Transverse colon (tissue), 4 donors: ENCODE measurements at regions of chr2 and their contacts with region 1.

Region 1: DNA sequence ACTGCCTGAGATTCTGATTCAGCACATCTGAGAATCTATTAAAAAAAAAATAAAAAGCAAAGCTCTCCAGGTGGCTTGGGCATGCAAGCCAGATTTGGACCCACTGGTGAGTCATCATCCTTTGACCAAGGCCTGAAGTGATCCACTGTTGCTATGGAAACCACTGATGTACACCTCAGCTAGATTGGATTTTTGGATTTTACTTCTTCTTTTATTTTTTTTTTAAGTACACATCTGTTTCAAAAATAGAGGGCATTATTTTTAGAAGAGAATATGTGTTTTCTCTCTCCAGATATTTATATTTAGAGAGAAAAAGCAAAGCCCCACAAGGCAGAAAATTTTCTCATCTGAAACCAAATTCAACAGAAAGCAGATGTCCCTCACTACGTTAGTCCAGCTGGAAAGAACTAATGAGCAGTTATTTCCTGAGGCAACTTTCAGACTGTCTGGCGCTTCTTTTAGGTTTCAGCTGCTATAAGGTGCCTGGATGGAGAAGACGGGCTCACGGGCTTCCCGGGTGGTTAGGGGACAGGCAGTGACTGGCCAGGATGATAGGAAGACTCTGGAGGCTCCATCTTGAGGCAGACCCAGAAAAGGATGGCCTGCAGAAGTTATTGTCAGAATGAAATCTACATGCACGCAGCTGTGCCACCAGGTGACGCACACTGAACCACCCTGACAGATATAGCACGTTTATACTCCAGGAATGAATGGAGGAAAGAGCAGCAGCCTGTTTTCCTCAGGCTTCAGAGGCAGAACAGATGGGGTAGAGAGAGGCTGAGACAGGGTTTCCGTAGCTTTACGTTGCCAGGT is 50.5 kb downstream of the MRPL35 start:
- DNase-seq: peak; percentile 54
- H3K4me3 ChIP-seq: no peak overlapping the region
- H3K27ac ChIP-seq: peak overlapping the region; percentile 34 to 81 (median 76)
- H3K4me1 ChIP-seq: peaks cover 4 to 22% (median 14%) of the 10 kb centered on the region in 4 donors
- H3K27me3 ChIP-seq: no peaks in the 10 kb centered on the region
- CTCF ChIP-seq: peak; percentile 33 to 75 (median 56)
- EP300 ChIP-seq: no peak
- POLR2A ChIP-seq: no peak

Region 2: DNA sequence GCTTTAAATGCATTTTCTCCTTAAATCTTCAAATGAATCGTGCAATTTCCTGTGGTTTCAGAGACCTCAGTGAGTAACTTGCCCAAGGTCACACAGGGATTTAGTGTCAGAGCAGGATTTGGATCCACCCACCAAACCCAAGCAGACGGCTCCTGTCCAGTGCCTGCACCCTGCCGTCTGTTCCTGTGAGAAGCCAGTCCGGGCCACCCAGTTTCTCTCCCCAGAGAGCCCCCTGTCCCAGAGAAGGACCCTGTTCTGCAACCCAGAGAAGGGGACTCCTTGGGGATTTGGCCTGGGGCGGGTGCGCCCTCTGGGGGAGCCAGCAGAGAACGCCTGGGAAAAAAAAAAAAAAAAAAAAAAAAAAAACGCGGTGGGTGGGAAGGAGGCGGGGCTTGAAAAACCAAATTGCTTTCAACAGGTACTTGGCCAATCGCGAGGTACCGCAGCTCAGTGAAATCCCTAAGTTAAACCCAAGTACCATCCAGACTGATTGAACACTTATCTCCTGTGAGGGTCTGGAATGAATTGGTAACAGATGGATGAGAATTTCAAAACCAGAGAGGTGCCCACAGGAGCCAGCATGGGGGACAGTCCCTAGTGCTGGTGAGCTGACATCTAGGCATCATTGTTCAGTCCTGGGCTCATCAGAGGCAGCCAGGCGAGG is 118.5 kb after region 1 on chr2:
- in situ Hi-C with region 1: loop called in 1 of 4 experiments (anchors 25 kb)
- intact Hi-C with region 1: no loop called
- DNase-seq: peak; percentile 50
- H3K4me3 ChIP-seq: peak overlapping the region in 1 of 4 donors; percentile 1
- H3K27ac ChIP-seq: peak overlapping the region in 1 of 4 donors; percentile 45
- H3K4me1 ChIP-seq: peaks cover 6 to 36% (median 9%) of the 10 kb centered on the region in 4 donors
- H3K27me3 ChIP-seq: no peaks in the 10 kb centered on the region
- CTCF ChIP-seq: peak; percentile 60 to 71 (median 65)
- EP300 ChIP-seq: no peak
- POLR2A ChIP-seq: no peak